ENCODE measurements at regions of chr10 and their contacts with region 1.

Region 1: DNA sequence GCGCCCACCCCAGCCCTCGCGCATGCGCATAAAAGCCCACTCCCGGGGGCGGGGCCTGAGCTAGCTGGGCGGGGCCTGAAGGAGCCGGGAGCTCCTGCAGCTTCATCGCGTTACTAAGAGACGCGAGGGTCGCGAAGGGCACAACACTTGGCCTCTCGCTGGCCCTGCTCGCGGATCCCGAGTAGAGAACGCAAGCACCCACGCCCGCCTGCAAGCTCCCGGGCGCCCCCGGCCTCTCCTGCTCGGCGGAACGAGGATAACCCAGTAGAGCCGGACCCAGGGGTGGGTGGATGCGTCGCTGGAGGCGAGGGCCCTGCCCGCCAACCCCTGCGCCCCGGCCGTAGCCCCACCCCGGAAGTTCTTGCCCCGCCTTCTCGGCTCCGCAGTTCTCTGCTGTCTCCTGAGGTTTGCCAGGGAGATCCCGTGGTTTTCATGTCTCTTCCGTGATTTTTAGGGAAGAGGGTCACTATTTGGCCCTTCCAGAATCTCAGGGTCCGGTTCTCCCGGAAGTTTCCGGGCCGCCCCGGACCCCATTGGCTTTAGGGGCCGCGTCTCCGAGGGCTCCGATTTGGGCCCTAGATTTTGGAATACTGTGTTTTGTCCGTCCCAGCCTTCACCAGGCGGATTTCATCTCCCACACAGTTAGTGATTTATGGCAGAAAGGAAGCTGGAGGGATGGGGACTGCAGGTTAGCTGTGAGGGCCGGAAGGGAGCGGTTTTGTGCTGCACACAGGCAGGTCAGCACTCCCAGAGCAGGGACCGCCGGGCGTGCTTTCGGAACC is at the start of gene MEIG1:
- DNase-seq: peak; percentile 94
- ATAC-seq: peak; percentile 88
- H3K4me3 Mint-ChIP-seq: peak within 1 kb of the TSS; percentile 98
- H3K27ac Mint-ChIP-seq: peak within 1 kb of the TSS; percentile 99
- H3K4me1 Mint-ChIP-seq: peaks cover 19% of the 10 kb centered on the region
- H3K27me3 Mint-ChIP-seq: no peaks in the 10 kb centered on the region
- CTCF ChIP-seq: no peak
- total RNA-seq, gene MEIG1: 0.79 TPM in 1 of 2 experiments, not detected in the other

Region 2: GRCh38 chr10:14674376-14675050 is 285.0 kb before region 1 on chr10:
- CTCF ChIA-PET with region 1: no interaction called
- POLR2A ChIA-PET with region 1: no interaction called
- intact Hi-C with region 1: no loop called
- DNase-seq: no peak
- ATAC-seq: no peak
- H3K4me3 Mint-ChIP-seq: no peak overlapping the region
- H3K27ac Mint-ChIP-seq: no peak overlapping the region
- H3K4me1 Mint-ChIP-seq: no peaks in the 10 kb centered on the region
- H3K27me3 Mint-ChIP-seq: no peaks in the 10 kb centered on the region
- CTCF ChIP-seq: no peak

Region 3: DNA sequence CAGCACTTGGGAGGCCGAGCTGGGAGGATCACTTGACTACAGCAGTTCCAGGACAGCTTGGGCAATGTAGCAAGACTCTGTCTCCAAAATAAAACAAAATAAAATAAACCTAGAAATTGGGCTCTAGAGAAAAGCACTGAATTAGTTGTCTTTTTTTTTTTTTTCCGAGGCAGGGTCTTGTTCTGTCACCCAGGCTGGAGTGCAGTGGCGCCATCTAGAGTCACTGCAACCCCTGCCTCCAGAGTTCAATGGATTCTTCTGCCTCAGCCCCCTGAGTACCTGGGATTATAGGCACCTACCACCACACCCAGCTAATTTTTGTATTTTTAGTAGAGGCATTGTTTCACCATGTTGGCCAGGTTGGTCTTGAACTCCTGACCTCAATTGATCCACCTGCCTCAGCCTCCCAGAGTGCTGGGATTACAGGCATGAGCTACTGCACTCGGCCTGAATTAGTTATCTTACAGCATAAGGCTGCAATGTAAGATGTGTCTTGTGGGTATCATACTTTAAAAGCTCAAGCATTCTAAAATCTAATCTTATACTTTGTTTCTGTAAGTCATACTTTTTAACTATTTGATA is 12.5 kb after region 1 on chr10:
- CTCF ChIA-PET with region 1: interaction called, 18 read pairs
- POLR2A ChIA-PET with region 1: interaction called, 4 read pairs
- intact Hi-C with region 1: no loop called
- DNase-seq: peak; percentile 76
- ATAC-seq: peak; percentile 61
- H3K4me3 Mint-ChIP-seq: no peak overlapping the region
- H3K27ac Mint-ChIP-seq: no peak overlapping the region
- H3K4me1 Mint-ChIP-seq: no peaks in the 10 kb centered on the region
- H3K27me3 Mint-ChIP-seq: peaks cover 16% of the 10 kb centered on the region
- CTCF ChIP-seq: peak; percentile 75

Measured in activated CD8-positive, alpha-beta T cell treated with anti-CD3 and anti-CD28 coated beads for 36 hours (primary cell).